ENCODE measurements at regions of chr17 and their contacts with region 1.

Region 1: DNA sequence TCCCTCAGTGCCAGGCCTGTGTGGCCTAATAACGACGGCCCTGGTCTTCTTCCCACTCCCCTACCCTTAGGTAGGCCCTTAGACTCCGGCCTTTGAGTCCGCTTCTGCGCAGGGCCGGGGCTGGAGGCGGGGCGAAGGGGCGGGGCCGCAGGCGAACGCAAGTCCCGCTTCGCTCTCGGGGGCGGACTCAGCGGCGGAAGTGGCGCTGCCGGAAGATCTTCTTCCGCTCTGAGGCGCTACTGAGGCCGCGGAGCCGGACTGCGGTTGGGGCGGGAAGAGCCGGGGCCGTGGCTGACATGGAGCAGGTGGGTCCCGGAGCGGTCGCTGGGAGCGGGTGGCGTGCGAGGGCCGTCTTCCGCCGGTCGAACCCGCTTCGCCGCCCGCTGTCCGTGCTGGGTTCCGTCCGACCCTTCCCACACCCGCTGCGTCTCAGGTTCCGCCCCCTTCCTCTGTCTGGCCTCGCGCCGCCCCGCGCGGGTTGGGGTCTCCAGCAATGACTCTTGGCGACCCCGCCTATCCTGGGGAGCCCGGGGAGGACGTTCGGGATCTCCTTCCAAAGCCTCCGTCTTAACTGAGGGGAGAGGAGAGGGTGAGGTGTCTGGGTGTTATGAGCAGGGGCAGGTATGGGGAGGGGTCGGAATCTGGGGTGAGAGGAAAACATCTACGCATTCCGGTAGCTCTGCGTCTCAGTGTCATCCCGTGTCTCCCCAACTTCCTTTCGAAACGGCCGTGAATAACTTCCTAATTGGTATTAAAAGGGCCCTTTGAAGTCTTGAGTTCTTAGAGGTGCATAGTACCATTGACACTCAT is at the start of gene STARD3:
- DNase-seq: peak; percentile 96
- ATAC-seq: peak; percentile 97
- total RNA-seq, gene STARD3: 13.9 TPM

Region 2: DNA sequence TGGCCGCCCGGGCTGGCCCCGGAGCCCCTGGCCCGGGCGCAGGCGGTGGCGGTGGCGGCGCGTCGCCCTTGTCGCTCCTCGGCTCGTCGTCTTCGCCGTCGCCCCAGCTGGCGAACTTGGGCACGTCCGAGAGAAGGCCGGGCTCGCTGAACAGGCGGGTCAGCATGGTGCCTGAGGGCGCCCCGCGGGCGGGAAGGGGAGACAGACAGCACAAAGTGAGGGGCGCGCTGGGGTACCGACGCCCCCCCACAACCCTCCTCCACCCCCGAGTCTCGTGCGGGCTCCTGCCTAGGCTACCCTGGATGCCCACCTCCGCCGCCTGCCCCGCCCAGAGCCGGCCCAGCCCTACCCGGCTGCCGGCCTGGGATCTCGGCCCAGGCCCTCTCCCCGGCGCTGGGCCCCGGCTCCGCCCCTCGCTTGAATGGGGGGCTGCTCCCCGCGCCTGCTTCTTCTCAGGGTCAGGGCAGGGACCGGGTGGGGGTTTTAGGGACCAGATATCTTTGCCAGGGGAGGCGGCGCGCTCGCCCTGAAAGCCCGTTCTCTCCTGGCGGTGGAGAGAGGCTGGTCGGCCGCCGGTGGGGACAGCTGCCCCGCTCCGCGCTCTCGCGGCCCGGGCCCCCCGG is 30.6 kb before region 1 on chr17:
- intact Hi-C with region 1: no loop called
- DNase-seq: peak; percentile 27
- ATAC-seq: peak; percentile 27

Region 3: DNA sequence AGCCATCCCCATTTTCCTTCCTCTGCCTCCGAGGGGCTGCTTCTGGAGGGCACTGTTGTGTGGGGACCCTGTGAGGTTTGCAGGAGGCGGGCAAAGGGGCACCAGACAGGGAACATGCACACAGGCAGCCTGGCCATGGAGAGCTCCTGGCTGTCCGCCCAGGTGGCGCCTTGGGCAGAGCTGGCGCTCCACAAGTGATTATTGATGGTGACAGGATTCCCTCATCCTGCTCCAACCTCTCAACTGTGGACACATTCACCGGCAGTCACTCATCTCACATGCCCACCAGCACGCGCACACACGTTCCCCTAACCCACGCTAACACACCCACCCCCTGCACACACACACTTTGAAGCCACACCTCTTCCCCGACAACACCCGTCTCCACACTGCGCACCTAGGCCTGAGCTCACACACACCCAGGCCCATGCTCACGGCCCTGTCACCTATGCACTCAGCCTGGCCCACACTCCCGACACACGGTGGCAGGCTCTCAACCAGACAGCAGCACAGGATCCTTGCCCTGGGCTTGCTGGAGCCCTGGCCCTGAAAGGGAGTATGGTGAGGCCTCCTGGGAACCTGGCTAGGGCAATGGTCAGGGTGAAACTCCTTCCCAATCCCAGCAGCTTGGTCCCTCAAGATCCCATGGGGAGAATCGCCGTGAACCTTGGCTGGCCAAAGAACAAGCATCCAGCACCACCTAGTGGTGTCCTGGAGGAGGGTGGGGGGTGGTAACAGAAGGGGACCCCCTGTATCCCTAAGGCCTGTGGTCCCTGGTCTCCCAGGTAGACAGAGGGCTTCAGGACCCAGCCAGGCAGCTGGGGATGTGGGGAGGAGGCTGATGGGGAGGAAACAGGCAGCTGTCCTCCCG is 34.8 kb after region 1 on chr17:
- intact Hi-C with region 1: loop called (anchors 5 kb)
- DNase-seq: peak; percentile 80
- ATAC-seq: peak; percentile 32